Gastrocnemius medialis (tissue), 4 donors: ENCODE measurements at regions of chr15 and their contacts with region 1.

Region 1: DNA sequence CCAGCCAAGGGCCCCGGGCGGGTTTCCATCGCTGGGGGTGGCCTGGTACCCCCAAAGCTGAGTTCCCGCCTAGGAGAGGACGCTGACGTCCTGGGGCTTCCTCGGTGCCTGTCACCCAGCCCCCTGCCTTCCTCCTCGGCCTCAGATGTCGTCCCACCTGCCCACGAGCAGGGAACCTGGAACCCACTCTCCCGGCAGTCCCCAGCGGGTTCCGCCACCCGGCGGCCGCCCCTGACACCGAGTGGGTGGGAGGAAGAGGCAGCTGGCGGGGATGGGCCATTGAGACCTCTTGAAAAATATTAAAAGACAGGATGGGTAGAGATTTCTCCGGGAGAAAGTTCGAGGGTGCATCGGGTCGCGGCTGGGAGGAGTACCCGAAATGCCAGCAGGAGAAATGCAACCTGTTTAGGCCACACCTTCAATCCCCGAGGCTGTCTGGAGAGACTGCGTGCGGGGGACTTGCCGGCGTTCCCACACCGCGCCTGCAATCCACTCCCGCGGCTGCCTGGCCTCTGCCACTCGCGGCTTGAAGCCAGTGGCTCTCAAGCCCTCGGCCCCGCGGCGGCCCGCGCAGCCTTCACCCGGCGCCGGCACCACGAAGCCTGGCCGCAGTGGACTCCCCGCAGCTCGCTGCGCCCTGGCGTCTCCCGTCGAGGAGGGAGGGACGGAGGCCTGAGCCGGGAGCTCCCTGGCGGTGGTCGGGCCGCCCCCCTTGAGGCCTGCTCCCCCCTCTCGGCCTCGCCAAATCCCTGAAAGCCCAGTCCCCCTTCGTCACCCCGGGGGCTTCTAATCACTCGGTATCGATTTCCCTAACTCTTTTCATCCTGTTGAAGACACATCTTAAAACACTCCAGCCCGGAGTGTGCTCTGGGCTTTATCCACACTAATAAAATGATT is 8.6 kb upstream of the NR2F2 start:
- DNase-seq: no peak
- ATAC-seq: peak in 1 of 2 donors; percentile 35
- H3K4me3 ChIP-seq: peak overlapping the region; percentile 46 to 71 (median 58)
- H3K27ac ChIP-seq: peak overlapping the region; percentile 86 to 93 (median 89)
- H3K4me1 ChIP-seq: peaks cover 17 to 21% of the 10 kb centered on the region in 2 donors
- H3K27me3 ChIP-seq: peaks cover 52 to 56% (median 54%) of the 10 kb centered on the region in 3 donors
- CTCF ChIP-seq: no peak
- POLR2A ChIP-seq: no peak

Region 2: GRCh38 chr15:95326431-95327182 is 995.3 kb before region 1 on chr15:
- in situ Hi-C with region 1: no loop called
- intact Hi-C with region 1: loop called (anchors 5 kb)
- DNase-seq: peak in 1 of 2 donors; percentile 19
- ATAC-seq: peak in 1 of 2 donors; percentile 52
- H3K4me3 ChIP-seq: peak overlapping the region; percentile 37 to 48 (median 44)
- H3K27ac ChIP-seq: peak overlapping the region; percentile 57 to 72 (median 66)
- H3K4me1 ChIP-seq: no peaks in the 10 kb centered on the region
- H3K27me3 ChIP-seq: peaks cover 0 to 9% (median 0%) of the 10 kb centered on the region in 3 donors
- CTCF ChIP-seq: no peak
- POLR2A ChIP-seq: peak in 1 of 2 donors; percentile 7